H1 (cell line): ENCODE measurements at regions of chr1 and their contacts with region 1.

Region 1: GRCh38 chr1:54121482-54122134 is 31.2 kb downstream of the CDCP2 start:
- DNase-seq: peak; percentile 56 to 94
- H3K4me3 ChIP-seq: peak overlapping the region; percentile 1 to 45 (median 17); a peak in 5 of 8 replicates
- H3K27ac ChIP-seq: no peak overlapping the region
- H3K4me1 ChIP-seq: peaks cover 7 to 24% (median 15%) of the 10 kb centered on the region in 4 experiments
- H3K27me3 ChIP-seq: peaks cover 0 to 11% (median 8%) of the 10 kb centered on the region in 4 experiments; a peak in 5 of 7 replicates
- CTCF ChIP-seq: peak; percentile 78 to 85 (median 84)
- EP300 ChIP-seq: no peak
- POLR2A ChIP-seq: peak in 1 of 2 experiments; percentile 36; a peak in 1 of 3 replicates
- RAD21 ChIP-seq: peak; percentile 83 to 92

Region 2: GRCh38 chr1:53655931-53656746 is 465.5 kb before region 1 on chr1:
- CTCF ChIA-PET with region 1: no interaction called
- POLR2A ChIA-PET with region 1: no interaction called
- DNase-seq: no peak
- H3K4me3 ChIP-seq: no peak overlapping the region
- H3K27ac ChIP-seq: no peak overlapping the region
- H3K4me1 ChIP-seq: no peaks in the 10 kb centered on the region; a peak in 2 of 7 replicates
- H3K27me3 ChIP-seq: no peaks in the 10 kb centered on the region; a peak in 1 of 7 replicates
- CTCF ChIP-seq: no peak
- EP300 ChIP-seq: no peak
- POLR2A ChIP-seq: no peak
- RAD21 ChIP-seq: no peak

Region 3: DNA sequence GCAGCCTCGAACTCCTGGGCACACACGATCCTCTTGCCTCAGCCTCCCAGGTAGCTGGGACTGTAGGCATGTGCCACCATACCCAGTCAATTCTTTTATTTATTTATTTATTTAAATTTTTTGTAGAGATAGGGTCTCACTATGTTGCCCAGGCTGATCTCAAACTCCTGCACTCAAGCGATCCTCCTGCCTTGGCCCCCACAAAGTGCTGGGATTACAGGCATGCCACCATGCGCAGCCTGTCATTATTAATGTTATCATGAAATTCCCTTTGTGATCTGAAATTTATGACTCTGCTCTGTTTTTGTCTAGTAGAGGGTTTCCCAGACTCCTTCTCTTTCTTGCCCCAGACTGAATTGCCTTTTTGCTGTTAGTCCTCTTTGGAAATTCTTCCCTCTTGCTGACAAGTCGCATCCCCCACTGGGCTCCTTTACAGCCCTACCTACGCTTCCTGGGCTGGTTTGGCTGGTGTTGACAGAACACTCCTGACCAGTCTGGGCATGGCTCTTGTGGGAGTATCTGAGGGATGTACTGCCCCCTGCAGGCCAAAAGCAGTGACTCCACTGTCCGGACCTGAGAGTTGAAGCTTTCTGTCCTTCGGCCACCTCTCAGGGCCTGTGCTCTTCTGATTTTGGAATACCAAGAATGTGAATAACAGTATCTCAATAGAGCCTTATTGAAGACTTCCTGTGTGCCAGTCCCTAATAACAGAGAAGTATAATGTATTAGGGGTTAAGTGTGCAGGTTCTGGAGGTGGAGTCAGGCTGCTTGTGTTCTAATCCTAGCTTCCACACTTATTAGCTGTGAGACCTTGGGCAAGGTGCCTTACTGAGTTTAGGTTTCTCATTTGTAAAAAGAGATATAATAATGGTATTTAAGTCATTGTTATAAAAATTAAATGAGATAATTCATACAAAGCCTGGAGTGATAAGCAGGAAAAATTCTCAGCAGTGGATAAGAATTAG is 40.0 kb before region 1 on chr1:
- CTCF ChIA-PET with region 1: interaction called, 10 read pairs
- POLR2A ChIA-PET with region 1: no interaction called
- DNase-seq: peak; percentile 85 to 88
- H3K4me3 ChIP-seq: no peak overlapping the region
- H3K27ac ChIP-seq: no peak overlapping the region
- H3K4me1 ChIP-seq: no peaks in the 10 kb centered on the region
- H3K27me3 ChIP-seq: no peaks in the 10 kb centered on the region
- CTCF ChIP-seq: peak; percentile 85 to 98 (median 95)
- EP300 ChIP-seq: no peak
- POLR2A ChIP-seq: no peak
- RAD21 ChIP-seq: peak; percentile 73 to 82

Region 4: GRCh38 chr1:54132495-54132894 is 10.9 kb after region 1 on chr1:
- CTCF ChIA-PET with region 1: interaction called, 110 read pairs
- POLR2A ChIA-PET with region 1: interaction called, 9 read pairs
- DNase-seq: no peak
- H3K4me3 ChIP-seq: no peak overlapping the region
- H3K27ac ChIP-seq: no peak overlapping the region
- H3K4me1 ChIP-seq: peaks cover 12 to 24% (median 16%) of the 10 kb centered on the region in 4 experiments
- H3K27me3 ChIP-seq: no peaks in the 10 kb centered on the region
- CTCF ChIP-seq: no peak
- EP300 ChIP-seq: no peak
- POLR2A ChIP-seq: no peak
- RAD21 ChIP-seq: no peak

Region 5: DNA sequence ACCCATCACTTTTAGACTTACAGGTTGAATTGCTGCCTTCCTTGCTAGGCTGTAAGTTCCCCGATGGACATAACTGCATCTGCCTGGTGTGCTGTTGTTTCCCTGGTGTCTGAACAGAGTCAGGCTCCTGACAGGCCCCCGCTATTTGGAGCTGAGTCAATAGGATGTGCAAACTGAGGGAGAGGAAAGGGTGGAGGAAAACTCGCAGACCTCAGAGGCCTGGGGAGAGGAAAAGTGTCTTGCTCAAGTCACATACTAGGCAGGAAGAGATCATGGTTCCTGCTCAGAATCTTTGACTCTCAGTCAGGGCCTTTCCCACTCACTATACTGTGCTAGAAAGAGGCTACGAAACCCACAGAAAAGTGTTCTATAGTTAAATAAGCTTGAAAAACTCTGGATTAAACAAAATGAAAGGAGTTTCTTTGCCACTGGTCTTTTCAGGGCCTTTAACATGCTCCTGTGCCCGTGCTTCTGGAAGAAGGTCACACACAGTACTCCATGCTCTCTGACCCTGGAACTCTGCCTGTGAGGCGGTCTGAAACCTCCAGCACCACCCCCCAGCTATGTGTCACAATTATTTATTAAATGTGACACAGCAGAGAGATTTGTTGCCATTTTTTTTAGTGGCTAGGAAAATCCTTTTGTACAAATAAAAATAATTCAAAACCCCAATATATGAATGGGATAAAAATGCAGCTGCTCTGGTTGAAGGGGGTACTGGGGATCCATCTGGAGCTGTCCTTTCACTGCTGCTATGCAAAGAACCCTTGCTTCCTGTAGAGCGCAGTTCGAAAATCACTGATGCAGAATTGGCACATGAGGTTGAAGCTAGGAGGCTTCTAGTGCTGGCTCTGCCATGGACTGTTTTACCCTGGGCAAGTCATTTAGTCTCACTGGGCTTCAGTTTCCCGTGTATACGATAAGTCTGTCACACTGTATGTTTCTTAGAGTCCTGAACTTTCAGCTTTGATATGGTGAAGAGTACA is 51.3 kb after region 1 on chr1:
- CTCF ChIA-PET with region 1: interaction called, 13 read pairs
- POLR2A ChIA-PET with region 1: no interaction called
- DNase-seq: no peak
- H3K4me3 ChIP-seq: no peak overlapping the region
- H3K27ac ChIP-seq: no peak overlapping the region
- H3K4me1 ChIP-seq: peaks cover 0 to 7% (median 0%) of the 10 kb centered on the region in 4 experiments; a peak in 1 of 7 replicates
- H3K27me3 ChIP-seq: no peaks in the 10 kb centered on the region
- CTCF ChIP-seq: no peak
- EP300 ChIP-seq: no peak
- POLR2A ChIP-seq: no peak
- RAD21 ChIP-seq: no peak

Region 6: GRCh38 chr1:54199765-54200518 is 78.3 kb after region 1 on chr1 and contains the starts of genes CYB5RL and MRPL37:
- CTCF ChIA-PET with region 1: interaction called, 13 read pairs
- POLR2A ChIA-PET with region 1: interaction called, 7 read pairs
- DNase-seq: peak; percentile 73 to 91
- H3K4me3 ChIP-seq: peak within 1 kb of the TSS; percentile 91 to 99 (median 96)
- H3K27ac ChIP-seq: peak within 1 kb of the TSS; percentile 84
- H3K4me1 ChIP-seq: peaks cover 0 to 13% (median 6%) of the 10 kb centered on the region in 4 experiments; a peak in 6 of 7 replicates
- H3K27me3 ChIP-seq: no peaks in the 10 kb centered on the region
- CTCF ChIP-seq: no peak
- EP300 ChIP-seq: no peak
- POLR2A ChIP-seq: peak; percentile 78 to 98
- RAD21 ChIP-seq: no peak
- total RNA-seq, gene CYB5RL: 14.1 and 15.1 TPM in 2 replicates
- total RNA-seq, gene MRPL37: 126 and 129 TPM in 2 replicates

Region 7: GRCh38 chr1:54372978-54373377 is 251.4 kb after region 1 on chr1:
- CTCF ChIA-PET with region 1: no interaction called
- POLR2A ChIA-PET with region 1: no interaction called
- DNase-seq: no peak
- H3K4me3 ChIP-seq: no peak overlapping the region
- H3K27ac ChIP-seq: no peak overlapping the region
- H3K4me1 ChIP-seq: peaks cover 30 to 48% (median 36%) of the 10 kb centered on the region in 4 experiments
- H3K27me3 ChIP-seq: no peaks in the 10 kb centered on the region
- CTCF ChIP-seq: no peak
- EP300 ChIP-seq: no peak
- POLR2A ChIP-seq: no peak
- RAD21 ChIP-seq: no peak